ENCODE measurements at regions of chr3 and their contacts with region 1.

Region 1: GRCh38 chr3:52001443-52001974 is 5.8 kb upstream of the RPL29 start:
- DNase-seq: no peak
- ATAC-seq: peak; percentile 97
- H3K4me3 ChIP-seq: no peak overlapping the region
- H3K27ac ChIP-seq: no peak overlapping the region
- H3K4me1 ChIP-seq: peaks cover 12% of the 10 kb centered on the region
- H3K27me3 ChIP-seq: no peaks in the 10 kb centered on the region; a peak in 2 of 4 replicates
- CTCF ChIP-seq: peak; percentile 98 to 99 (median 98)
- EP300 ChIP-seq: no peak
- POLR2A ChIP-seq: no peak
- RAD21 ChIP-seq: peak; percentile 97

Region 2: DNA sequence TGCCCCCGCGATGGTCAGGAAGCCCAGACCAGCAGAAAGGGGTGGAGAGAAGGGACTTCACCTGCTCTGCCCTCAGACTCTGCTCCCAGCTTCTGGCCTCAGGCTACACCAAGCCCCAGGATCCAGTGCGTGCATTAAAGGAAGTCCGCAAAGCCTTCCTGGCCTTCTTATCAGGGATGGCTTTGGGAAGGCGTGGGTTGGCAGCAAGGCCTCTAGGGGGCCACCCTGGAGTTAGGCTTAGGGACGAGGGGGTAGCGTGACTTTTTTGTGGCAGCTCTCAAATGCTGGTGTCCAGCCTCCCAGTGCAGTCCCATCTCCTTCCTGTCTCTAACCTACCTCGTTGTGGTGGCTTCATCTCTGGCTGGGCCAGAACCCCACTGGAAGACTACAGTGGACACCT is 13.1 kb after region 1 on chr3:
- CTCF ChIA-PET with region 1: interaction called, 54 read pairs
- POLR2A ChIA-PET with region 1: interaction called, 6 read pairs
- RAD21 ChIA-PET with region 1: interaction called, 48 read pairs
- SMC1A ChIA-PET with region 1: interaction called, 19 read pairs
- in situ Hi-C with region 1: no loop called
- intact Hi-C with region 1: no loop called
- DNase-seq: no peak
- ATAC-seq: peak; percentile 22
- H3K4me3 ChIP-seq: no peak overlapping the region
- H3K27ac ChIP-seq: no peak overlapping the region
- H3K4me1 ChIP-seq: peaks cover 4% of the 10 kb centered on the region
- H3K27me3 ChIP-seq: no peaks in the 10 kb centered on the region
- CTCF ChIP-seq: 0 out of 6 replicates have a peak, but pooled peaks of 1 of the 3 experiments have one; percentile 17
- EP300 ChIP-seq: no peak
- POLR2A ChIP-seq: no peak
- RAD21 ChIP-seq: peak; percentile 3; the same call in 1 of the 2 replicates

Region 3: GRCh38 chr3:52041118-52041731 is 39.7 kb after region 1 on chr3:
- CTCF ChIA-PET with region 1: interaction called, 44 read pairs
- POLR2A ChIA-PET with region 1: no interaction called
- RAD21 ChIA-PET with region 1: interaction called, 24 read pairs
- SMC1A ChIA-PET with region 1: interaction called, 9 read pairs
- in situ Hi-C with region 1: no loop called
- intact Hi-C with region 1: no loop called
- DNase-seq: no peak
- ATAC-seq: peak; percentile 62
- H3K4me3 ChIP-seq: no peak overlapping the region
- H3K27ac ChIP-seq: no peak overlapping the region
- H3K4me1 ChIP-seq: peaks cover 2% of the 10 kb centered on the region; the same call in 1 of the 2 replicates
- H3K27me3 ChIP-seq: no peaks in the 10 kb centered on the region
- CTCF ChIP-seq: peak in 2 of 3 experiments; percentile 34 to 38; a peak in 3 of 6 replicates
- EP300 ChIP-seq: no peak
- POLR2A ChIP-seq: no peak
- RAD21 ChIP-seq: no peak

Region 4: GRCh38 chr3:52108302-52109232 is 107.1 kb after region 1 on chr3:
- CTCF ChIA-PET with region 1: interaction called, 18 read pairs
- POLR2A ChIA-PET with region 1: no interaction called
- RAD21 ChIA-PET with region 1: interaction called, 16 read pairs
- SMC1A ChIA-PET with region 1: interaction called, 12 read pairs
- in situ Hi-C with region 1: no loop called
- intact Hi-C with region 1: no loop called
- DNase-seq: no peak
- ATAC-seq: peak; percentile 51; the same call in 2 of the 3 replicates
- H3K4me3 ChIP-seq: no peak overlapping the region
- H3K27ac ChIP-seq: no peak overlapping the region
- H3K4me1 ChIP-seq: no peaks in the 10 kb centered on the region
- H3K27me3 ChIP-seq: no peaks in the 10 kb centered on the region
- CTCF ChIP-seq: peak in 1 of 3 experiments; percentile 5; a peak in 2 of 6 replicates
- EP300 ChIP-seq: no peak
- POLR2A ChIP-seq: no peak
- RAD21 ChIP-seq: peak; percentile 37; the same call in 1 of the 2 replicates

Region 5: GRCh38 chr3:52136513-52136912 is 135.0 kb after region 1 on chr3:
- CTCF ChIA-PET with region 1: interaction called, 169 read pairs
- POLR2A ChIA-PET with region 1: interaction called, 5 read pairs
- RAD21 ChIA-PET with region 1: interaction called, 51 read pairs
- SMC1A ChIA-PET with region 1: interaction called, 8 read pairs
- in situ Hi-C with region 1: loop called (anchors 5 kb)
- intact Hi-C with region 1: no loop called
- DNase-seq: no peak
- ATAC-seq: no peak
- H3K4me3 ChIP-seq: no peak overlapping the region
- H3K27ac ChIP-seq: no peak overlapping the region
- H3K4me1 ChIP-seq: peaks cover 21% of the 10 kb centered on the region
- H3K27me3 ChIP-seq: no peaks in the 10 kb centered on the region
- CTCF ChIP-seq: no peak
- EP300 ChIP-seq: no peak
- POLR2A ChIP-seq: no peak
- RAD21 ChIP-seq: no peak

Region 6: DNA sequence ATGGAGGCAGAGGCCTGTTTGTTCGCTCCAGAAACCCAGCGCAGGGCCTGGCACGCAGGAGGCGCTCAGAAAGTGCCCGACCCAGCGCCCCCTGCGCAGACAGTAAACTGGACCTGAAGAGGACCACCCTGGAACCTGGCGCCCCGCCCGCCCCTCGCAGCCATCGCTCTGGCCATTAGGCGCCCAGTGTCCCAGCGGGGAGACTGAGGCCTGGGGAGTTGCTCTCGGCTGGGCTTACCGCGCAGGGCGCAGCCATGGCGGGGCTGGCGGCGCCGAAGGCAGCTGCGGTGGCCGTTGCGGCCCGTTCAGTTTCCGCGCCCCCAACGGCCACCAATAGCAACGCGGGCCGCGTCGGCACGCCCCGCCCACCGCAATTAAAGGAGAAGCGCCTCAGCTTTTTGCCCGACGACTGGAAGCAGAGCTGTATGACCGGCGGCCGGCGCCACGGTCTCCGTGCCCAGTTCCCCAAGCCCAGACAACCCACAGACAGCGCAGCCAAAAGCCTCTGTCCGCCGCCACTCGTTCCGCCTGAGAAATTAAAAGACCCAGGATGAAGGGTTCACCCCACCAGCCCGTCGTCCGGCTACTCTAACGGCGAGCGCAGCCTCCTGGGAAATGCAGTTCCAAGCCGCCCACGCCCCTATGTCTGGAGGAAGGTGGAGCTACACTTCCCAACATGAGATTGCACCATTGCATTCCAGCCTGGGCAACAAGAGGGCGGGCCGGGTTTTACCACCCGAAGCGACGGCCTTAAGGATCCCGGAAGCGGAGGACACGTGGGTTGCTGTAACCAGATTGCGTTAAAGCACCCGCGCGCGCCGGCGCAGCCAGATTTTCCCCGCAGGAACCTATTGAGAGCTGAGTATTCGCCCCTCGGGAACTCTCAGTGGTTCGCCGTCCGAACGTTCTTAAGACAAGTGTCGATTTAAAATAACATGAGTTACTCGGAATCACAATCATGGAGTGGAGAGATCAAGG is 152.9 kb after region 1 on chr3 and contains the start of gene POC1A:
- CTCF ChIA-PET with region 1: interaction called, 169 read pairs
- POLR2A ChIA-PET with region 1: no interaction called
- RAD21 ChIA-PET with region 1: interaction called, 4 read pairs
- SMC1A ChIA-PET with region 1: interaction called, 5 read pairs
- in situ Hi-C with region 1: no loop called
- intact Hi-C with region 1: no loop called
- DNase-seq: peak; percentile 86
- ATAC-seq: peak; percentile 92
- H3K4me3 ChIP-seq: peak within 1 kb of the TSS; percentile 76
- H3K27ac ChIP-seq: peak within 1 kb of the TSS; percentile 75
- H3K4me1 ChIP-seq: peaks cover 7% of the 10 kb centered on the region
- H3K27me3 ChIP-seq: no peaks in the 10 kb centered on the region
- CTCF ChIP-seq: no peak
- EP300 ChIP-seq: 0 out of 4 replicates have a peak, but pooled peaks of 1 of the 2 experiments have one; percentile 11
- POLR2A ChIP-seq: peak; percentile 75
- RAD21 ChIP-seq: no peak
- polyA plus RNA-seq, gene POC1A: 8.5 to 13.0 TPM

Region 7: DNA sequence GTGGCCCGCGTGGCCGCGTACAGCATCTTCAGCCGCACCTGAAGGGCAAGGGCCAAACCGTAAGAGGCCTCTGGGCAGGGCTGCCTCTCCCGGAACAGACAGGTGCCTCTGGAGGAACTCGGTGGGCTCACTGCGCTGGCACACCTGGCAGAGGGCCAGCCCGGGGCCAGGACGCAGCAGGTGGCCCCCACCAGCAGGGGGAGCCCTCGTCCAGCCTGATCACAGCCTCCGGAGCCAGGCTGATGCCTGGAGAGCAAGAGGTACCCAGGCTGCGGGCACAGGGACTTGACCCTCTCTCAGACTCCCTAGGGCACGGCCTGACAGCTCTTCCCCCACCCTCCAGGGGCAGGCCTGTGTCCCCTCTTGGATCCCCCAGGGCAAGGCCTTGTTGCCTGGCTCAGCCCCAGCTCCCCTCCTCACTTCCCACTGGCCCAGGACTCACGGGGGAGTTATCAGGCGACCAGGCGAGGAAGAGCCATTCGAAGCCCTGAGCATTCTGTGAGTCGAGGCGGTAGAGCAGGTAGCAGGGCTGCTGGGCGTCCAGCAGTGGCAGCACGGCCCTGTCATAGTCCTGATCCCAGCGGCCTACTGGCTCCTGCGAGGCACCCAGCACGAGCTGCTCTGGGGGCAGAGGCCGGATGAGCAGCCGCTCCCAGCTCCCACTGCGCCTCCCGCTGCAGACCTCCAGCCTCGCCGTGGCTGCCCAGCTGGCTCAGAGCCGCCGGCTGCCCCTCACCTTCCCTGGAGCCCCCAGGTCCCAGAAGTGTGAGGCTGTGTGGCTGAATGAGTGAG is 230.2 kb after region 1 on chr3:
- CTCF ChIA-PET with region 1: interaction called, 10 read pairs
- POLR2A ChIA-PET with region 1: no interaction called
- RAD21 ChIA-PET with region 1: no interaction called
- SMC1A ChIA-PET with region 1: no interaction called
- in situ Hi-C with region 1: no loop called
- intact Hi-C with region 1: no loop called
- DNase-seq: no peak
- ATAC-seq: peak; percentile 92
- H3K4me3 ChIP-seq: no peak overlapping the region
- H3K27ac ChIP-seq: no peak overlapping the region
- H3K4me1 ChIP-seq: peaks cover 9% of the 10 kb centered on the region
- H3K27me3 ChIP-seq: no peaks in the 10 kb centered on the region
- CTCF ChIP-seq: peak; percentile 92 to 98 (median 95)
- EP300 ChIP-seq: no peak
- POLR2A ChIP-seq: no peak
- RAD21 ChIP-seq: peak; percentile 78